ENCODE measurements at regions of chr7 and their contacts with region 1.

Region 1: DNA sequence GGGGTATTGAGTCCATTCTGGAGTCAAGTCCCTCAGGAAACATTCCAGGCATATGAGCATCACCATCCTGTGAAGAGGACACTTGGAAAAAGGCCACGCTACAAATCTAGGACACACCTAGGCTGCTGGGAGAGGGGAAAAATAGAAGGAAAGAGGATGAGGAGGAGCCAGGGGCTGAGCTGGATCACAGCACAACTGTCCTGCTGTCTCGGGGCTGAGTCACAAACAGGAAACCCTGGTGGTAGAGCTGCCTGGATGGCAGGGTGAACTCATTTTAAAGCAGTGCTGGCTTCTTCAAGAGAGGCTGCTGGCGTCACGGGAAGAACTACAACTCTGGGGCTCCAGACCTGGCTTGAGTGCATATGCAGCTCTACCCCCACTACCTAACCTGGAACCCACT is 151.5 kb downstream of the RNF216 start:
- DNase-seq: no peak
- H3K4me3 ChIP-seq: no peak overlapping the region
- CTCF ChIP-seq: no peak

Region 2: GRCh38 chr7:5580714-5581395 is 49.1 kb before region 1 on chr7:
- in situ Hi-C with region 1: no loop called
- DNase-seq: no peak
- H3K4me3 ChIP-seq: no peak overlapping the region
- CTCF ChIP-seq: no peak

Region 3: DNA sequence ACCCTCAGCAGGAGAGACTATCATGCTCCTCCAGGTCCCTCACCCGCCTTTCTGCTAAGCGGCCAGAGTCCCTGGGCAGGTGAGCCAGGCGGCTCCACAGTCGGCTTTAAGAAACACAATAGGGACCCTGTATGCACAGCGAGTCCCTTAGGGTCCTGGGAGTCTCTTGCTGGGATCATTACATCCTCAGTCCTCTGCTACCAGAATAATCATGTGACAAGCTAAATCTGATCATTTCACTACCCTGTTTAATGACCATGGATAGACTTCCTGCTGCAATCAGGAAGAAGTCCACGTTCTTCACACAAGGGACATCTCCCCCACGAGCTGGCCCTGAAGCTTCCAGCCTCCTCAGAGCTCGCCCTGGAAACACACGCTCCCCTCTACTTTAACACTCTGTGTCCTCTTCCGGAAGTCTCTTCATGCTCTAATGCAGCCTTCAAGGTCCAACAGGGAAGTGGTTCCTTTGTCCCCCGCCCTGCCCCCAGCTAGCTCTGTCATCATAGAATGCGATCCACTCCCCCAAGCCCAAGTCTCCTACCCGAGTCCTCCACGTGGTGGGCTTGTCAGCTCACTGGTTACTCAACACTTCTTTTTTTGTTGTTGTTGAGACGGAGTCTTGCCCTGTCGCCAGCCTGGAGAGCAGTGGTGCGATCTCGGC is 50.0 kb after region 1 on chr7:
- in situ Hi-C with region 1: loop called (anchors 5 kb)
- DNase-seq: no peak
- H3K4me3 ChIP-seq: no peak overlapping the region
- CTCF ChIP-seq: no peak

Region 4: GRCh38 chr7:5694912-5695726 is 65.2 kb after region 1 on chr7:
- in situ Hi-C with region 1: no loop called
- DNase-seq: peak; percentile 82
- H3K4me3 ChIP-seq: peak overlapping the region; percentile 8
- CTCF ChIP-seq: no peak